Naive thymus-derived CD4-positive, alpha-beta T cell (primary cell): ENCODE measurements at regions of chr11 and their contacts with region 1.

Region 1: GRCh38 chr11:111841370-111842053 is 29.9 kb downstream of the ALG9 start:
- DNase-seq: peak; percentile 56 to 80 (median 76)
- ATAC-seq: peak; percentile 93
- H3K4me3 ChIP-seq: no peak overlapping the region
- H3K4me3 Mint-ChIP-seq: no peak overlapping the region
- H3K27ac ChIP-seq: no peak overlapping the region
- H3K27ac Mint-ChIP-seq: peak overlapping the region in 2 of 9 donors; percentile 14 to 59
- H3K4me1 ChIP-seq: no peaks in the 10 kb centered on the region
- H3K4me1 Mint-ChIP-seq: peaks cover 0 to 14% (median 4%) of the 10 kb centered on the region in 7 donors
- H3K27me3 ChIP-seq: no peaks in the 10 kb centered on the region
- H3K27me3 Mint-ChIP-seq: no peaks in the 10 kb centered on the region

Region 2: GRCh38 chr11:111454561-111455192 is 386.8 kb before region 1 on chr11:
- CTCF ChIA-PET with region 1: no interaction called
- POLR2A ChIA-PET with region 1: no interaction called
- intact Hi-C with region 1: loop called in 1 of 2 experiments (anchors 1 kb)
- DNase-seq: peak in 3 of 9 donors; percentile 14 to 64 (median 23)
- ATAC-seq: no peak
- H3K4me3 ChIP-seq: no peak overlapping the region
- H3K4me3 Mint-ChIP-seq: no peak overlapping the region
- H3K27ac ChIP-seq: no peak overlapping the region
- H3K27ac Mint-ChIP-seq: no peak overlapping the region
- H3K4me1 ChIP-seq: no peaks in the 10 kb centered on the region
- H3K4me1 Mint-ChIP-seq: peaks cover 0 to 3% (median 0%) of the 10 kb centered on the region in 7 donors
- H3K27me3 ChIP-seq: no peaks in the 10 kb centered on the region
- H3K27me3 Mint-ChIP-seq: peaks cover 0 to 17% (median 8%) of the 10 kb centered on the region in 5 donors

Region 3: GRCh38 chr11:111565114-111565720 is 276.3 kb before region 1 on chr11:
- CTCF ChIA-PET with region 1: interaction called, 12 read pairs
- POLR2A ChIA-PET with region 1: no interaction called
- intact Hi-C with region 1: loop called (anchors 1 kb)
- DNase-seq: peak; percentile 11 to 64 (median 54)
- ATAC-seq: peak; percentile 60
- H3K4me3 ChIP-seq: no peak overlapping the region
- H3K4me3 Mint-ChIP-seq: no peak overlapping the region
- H3K27ac ChIP-seq: no peak overlapping the region
- H3K27ac Mint-ChIP-seq: no peak overlapping the region
- H3K4me1 ChIP-seq: no peaks in the 10 kb centered on the region
- H3K4me1 Mint-ChIP-seq: peaks cover 0 to 1% (median 0%) of the 10 kb centered on the region in 7 donors
- H3K27me3 ChIP-seq: no peaks in the 10 kb centered on the region
- H3K27me3 Mint-ChIP-seq: peaks cover 0 to 3% (median 0%) of the 10 kb centered on the region in 5 donors

Region 4: DNA sequence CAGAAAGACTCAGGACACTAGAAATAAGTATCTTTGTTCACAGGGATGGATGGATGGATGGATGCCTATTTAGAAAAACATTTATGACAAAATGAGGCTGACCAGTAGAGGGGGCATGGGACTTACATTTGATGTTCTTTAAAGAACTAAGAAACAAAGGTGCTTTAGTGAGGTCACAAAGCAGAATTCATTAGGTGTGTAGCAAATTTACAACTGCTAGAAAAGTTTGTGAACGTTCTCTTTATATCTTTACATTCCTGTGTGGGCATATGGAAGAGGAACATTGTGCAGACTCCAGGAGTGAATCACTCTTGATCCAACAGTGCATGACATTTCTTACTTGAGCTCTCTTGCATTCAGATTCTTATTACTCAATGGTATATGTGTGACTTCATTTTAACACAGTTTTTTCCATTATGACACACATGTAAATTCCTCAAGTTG is 255.1 kb before region 1 on chr11:
- CTCF ChIA-PET with region 1: interaction called, 18 read pairs
- POLR2A ChIA-PET with region 1: no interaction called
- intact Hi-C with region 1: loop called (anchors 1 kb)
- DNase-seq: peak in 7 of 9 donors; percentile 37 to 65 (median 56)
- ATAC-seq: peak; percentile 83
- H3K4me3 ChIP-seq: no peak overlapping the region
- H3K4me3 Mint-ChIP-seq: no peak overlapping the region
- H3K27ac ChIP-seq: no peak overlapping the region
- H3K27ac Mint-ChIP-seq: no peak overlapping the region
- H3K4me1 ChIP-seq: no peaks in the 10 kb centered on the region
- H3K4me1 Mint-ChIP-seq: peaks cover 0 to 2% (median 0%) of the 10 kb centered on the region in 7 donors
- H3K27me3 ChIP-seq: no peaks in the 10 kb centered on the region
- H3K27me3 Mint-ChIP-seq: peaks cover 0 to 11% (median 3%) of the 10 kb centered on the region in 5 donors

Region 5: DNA sequence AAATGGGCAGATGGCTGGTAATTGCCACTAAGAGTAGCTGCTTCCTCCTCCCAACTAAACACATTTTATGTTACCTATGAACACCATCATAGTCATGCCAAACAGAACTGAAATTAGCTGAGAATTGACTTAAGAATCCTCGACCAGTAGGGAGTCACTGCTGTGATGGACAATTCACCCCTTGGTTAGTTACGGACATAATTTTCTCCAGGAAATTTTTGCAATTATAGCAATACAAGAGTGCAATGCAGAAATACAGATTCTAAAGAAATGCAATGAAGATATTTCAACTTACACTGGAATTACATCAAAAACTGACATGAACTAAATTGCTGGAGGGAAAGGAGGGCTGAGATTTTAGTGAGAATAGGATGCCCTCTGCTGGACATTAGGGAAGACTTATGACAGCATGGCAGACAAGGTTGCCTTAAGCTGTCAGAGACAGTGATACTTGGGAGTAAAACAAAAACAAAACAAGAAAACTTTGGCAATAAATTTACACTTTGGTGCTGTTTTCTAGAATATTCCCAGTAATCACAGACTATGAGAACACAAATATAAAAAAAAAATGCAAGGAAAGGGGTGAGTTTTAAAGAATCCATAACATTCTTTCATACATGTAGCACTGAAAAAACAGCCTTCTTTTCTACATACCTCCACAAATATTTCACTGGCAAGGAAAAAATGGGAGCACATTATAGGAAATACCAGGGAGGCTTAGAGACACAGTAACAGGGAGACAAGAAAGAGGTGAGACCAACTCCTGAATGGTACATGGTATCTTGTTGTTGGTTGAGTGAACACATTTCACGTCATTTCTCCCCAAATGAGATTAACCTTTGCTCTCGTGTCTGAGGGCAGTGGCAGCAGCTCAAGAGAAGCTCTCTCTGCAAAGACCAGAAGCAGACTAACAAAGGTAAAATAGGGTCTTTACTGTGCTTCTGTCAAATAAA is 64.1 kb before region 1 on chr11:
- CTCF ChIA-PET with region 1: no interaction called
- POLR2A ChIA-PET with region 1: no interaction called
- intact Hi-C with region 1: loop called (anchors 1 kb)
- DNase-seq: peak in 7 of 9 donors; percentile 43 to 71 (median 57)
- ATAC-seq: peak; percentile 89
- H3K4me3 ChIP-seq: no peak overlapping the region
- H3K4me3 Mint-ChIP-seq: no peak overlapping the region
- H3K27ac ChIP-seq: no peak overlapping the region
- H3K27ac Mint-ChIP-seq: no peak overlapping the region
- H3K4me1 ChIP-seq: no peaks in the 10 kb centered on the region
- H3K4me1 Mint-ChIP-seq: no peaks in the 10 kb centered on the region
- H3K27me3 ChIP-seq: no peaks in the 10 kb centered on the region
- H3K27me3 Mint-ChIP-seq: no peaks in the 10 kb centered on the region

Region 6: DNA sequence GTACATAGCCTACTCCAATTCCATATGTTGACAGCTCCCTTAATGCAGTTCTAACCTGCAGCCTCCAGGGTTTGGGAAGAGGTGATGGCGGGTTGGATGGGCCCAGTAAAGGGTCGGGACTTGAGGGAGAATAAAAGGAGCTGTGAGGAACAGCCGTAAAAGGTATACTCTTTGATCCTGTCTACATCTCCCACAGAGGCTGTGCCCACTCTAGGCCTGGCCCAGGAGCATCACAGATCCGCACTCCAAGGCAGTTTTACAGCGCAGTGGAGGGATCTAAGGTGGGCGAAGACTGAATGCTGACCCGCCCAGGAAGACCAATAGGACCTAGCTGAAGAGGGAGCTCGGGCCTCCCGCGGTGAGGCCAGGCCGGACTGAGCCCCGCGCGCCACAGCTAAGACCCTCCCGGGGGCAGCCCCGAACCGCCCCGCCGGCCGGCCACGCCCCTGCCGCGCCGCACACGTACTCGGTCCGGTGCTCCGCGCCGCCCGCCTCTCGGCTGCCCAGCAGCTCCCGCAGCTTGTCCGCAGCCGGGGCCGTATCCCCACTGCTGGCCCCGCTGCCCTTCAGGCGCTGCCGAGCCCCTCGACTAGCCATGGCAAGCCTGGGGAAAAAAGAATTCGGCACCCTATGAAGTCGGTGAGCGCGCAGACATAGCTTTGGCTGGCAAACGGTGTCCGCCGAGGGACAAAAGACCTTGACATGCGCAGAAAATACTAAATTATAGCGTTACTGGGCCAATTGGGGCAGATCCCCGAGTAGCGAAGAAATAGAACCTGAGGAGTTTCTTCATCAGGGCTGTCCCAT is 29.6 kb after region 1 on chr11 and contains the start of gene ALG9:
- CTCF ChIA-PET with region 1: interaction called, 10 read pairs
- POLR2A ChIA-PET with region 1: no interaction called
- intact Hi-C with region 1: no loop called
- DNase-seq: peak; percentile 79 to 94 (median 88)
- ATAC-seq: peak; percentile 91
- H3K4me3 ChIP-seq: peak within 1 kb of the TSS; percentile 74
- H3K4me3 Mint-ChIP-seq: peak within 1 kb of the TSS; percentile 86 to 96 (median 93)
- H3K27ac ChIP-seq: peak within 1 kb of the TSS; percentile 91
- H3K27ac Mint-ChIP-seq: peak within 1 kb of the TSS; percentile 87 to 98 (median 94)
- H3K4me1 ChIP-seq: peaks cover 8 to 10% of the 10 kb centered on the region in 2 donors
- H3K4me1 Mint-ChIP-seq: peaks cover 9 to 41% (median 34%) of the 10 kb centered on the region in 7 donors
- H3K27me3 ChIP-seq: no peaks in the 10 kb centered on the region
- H3K27me3 Mint-ChIP-seq: no peaks in the 10 kb centered on the region
- total RNA-seq, gene ALG9: 16.4 to 30.2 (median 29.2) TPM